Naive thymus-derived CD4-positive, alpha-beta T cell (primary cell): ENCODE measurements at regions of chr19 and their contacts with region 1.

Region 1: DNA sequence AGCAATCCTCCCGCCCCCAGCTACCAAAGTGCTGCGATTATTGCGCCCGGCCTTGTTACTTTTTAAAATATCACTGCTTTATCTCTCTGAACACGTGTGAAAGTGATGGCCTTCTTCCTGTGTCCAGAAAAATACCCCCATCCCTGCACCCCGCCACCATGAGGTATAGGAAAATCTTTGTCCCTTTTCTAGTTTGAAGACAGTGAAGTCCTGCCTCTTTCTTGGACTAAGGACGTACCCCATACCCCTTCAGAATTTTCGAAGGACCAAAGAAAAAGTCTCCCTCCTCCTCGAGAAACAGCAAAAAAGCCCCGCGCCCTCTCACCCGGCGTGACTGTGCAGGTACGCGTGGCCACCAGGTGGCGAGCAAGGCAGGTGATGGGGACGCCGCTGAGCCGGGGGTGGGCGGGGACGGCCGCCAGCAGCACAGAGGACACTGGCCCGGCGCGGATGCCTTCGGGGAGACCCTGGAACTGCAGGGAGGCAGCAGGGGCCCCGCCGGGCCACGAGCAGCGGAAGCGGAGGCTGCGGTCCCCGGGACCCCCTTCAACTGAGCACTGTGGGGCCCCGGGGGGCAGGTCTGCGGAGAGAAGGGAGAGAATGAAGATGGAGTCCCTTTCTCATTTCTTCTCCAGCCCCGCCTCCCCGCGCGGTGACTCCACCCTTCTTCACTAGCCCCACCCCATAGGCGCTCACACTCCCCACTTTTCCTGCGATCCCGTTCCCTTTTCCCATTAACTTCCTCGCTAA is 3.2 kb downstream of the VSIG10L start:
- DNase-seq: peak; percentile 66 to 90 (median 82)
- ATAC-seq: peak; percentile 83
- H3K4me3 ChIP-seq: peak overlapping the region; percentile 65
- H3K4me3 Mint-ChIP-seq: peak overlapping the region; percentile 83 to 94 (median 88)
- H3K27ac ChIP-seq: no peak overlapping the region
- H3K27ac Mint-ChIP-seq: peak overlapping the region in 6 of 9 donors; percentile 7 to 75 (median 60)
- H3K4me1 ChIP-seq: peaks cover 10 to 11% of the 10 kb centered on the region in 2 donors
- H3K4me1 Mint-ChIP-seq: peaks cover 14 to 24% (median 19%) of the 10 kb centered on the region in 7 donors
- H3K27me3 ChIP-seq: no peaks in the 10 kb centered on the region
- H3K27me3 Mint-ChIP-seq: peaks cover 0 to 13% (median 4%) of the 10 kb centered on the region in 5 donors

Region 2: DNA sequence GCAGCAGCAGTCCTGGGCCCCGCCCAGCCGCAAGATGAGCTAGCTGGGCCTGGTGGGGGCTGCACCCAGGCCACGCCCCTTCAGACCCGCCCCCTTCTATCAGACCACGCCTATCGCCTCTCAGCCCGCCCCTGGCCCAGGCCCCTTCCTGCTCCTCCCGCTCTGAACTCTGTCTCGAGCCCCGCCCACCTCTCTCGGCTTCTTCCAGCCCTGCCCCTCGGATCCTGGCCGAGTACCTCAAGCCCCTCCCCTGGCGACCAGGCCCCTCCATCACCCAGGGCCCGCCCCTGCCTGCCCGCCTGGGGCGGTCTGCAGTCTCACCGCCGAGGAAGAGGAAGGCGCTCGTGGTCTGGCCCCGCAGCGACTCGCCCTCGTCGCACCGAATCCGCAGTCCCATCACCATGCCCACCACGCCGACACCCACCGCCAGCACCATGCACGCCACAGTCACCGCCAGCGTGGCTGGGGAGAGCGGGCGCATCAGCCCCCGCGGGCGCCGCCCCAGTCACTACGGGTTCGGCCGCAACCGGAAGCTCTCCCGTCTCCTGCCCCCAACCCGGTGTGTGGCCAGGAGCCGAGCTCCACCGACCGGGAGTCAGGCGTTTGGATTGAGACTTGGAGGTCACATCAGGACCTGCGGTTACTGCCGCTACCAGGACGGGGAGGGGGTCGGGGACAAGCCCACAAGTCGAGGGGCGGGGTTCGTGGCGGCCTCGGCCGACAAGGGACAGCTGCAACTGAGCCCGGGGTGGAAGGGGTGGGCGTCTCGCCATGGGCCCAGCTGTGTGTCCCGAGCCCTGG is 29.0 kb after region 1 on chr19:
- CTCF ChIA-PET with region 1: interaction called, 3 read pairs
- POLR2A ChIA-PET with region 1: no interaction called
- intact Hi-C with region 1: loop called (anchors 1 kb)
- DNase-seq: peak; percentile 84 to 100 (median 90)
- ATAC-seq: peak; percentile 93
- H3K4me3 ChIP-seq: peak overlapping the region; percentile 96
- H3K4me3 Mint-ChIP-seq: peak overlapping the region; percentile 92 to 100 (median 98)
- H3K27ac ChIP-seq: peak overlapping the region; percentile 81
- H3K27ac Mint-ChIP-seq: peak overlapping the region; percentile 79 to 98 (median 95)
- H3K4me1 ChIP-seq: peaks cover 23 to 26% of the 10 kb centered on the region in 2 donors
- H3K4me1 Mint-ChIP-seq: peaks cover 53 to 81% (median 59%) of the 10 kb centered on the region in 7 donors
- H3K27me3 ChIP-seq: no peaks in the 10 kb centered on the region
- H3K27me3 Mint-ChIP-seq: no peaks in the 10 kb centered on the region

Region 3: GRCh38 chr19:51407511-51408131 is 68.9 kb after region 1 on chr19:
- CTCF ChIA-PET with region 1: no interaction called
- POLR2A ChIA-PET with region 1: no interaction called
- intact Hi-C with region 1: loop called (anchors 1 kb)
- DNase-seq: peak in 3 of 9 donors; percentile 14 to 29 (median 23)
- ATAC-seq: peak; percentile 77
- H3K4me3 ChIP-seq: no peak overlapping the region
- H3K4me3 Mint-ChIP-seq: no peak overlapping the region
- H3K27ac ChIP-seq: no peak overlapping the region
- H3K27ac Mint-ChIP-seq: no peak overlapping the region
- H3K4me1 ChIP-seq: no peaks in the 10 kb centered on the region
- H3K4me1 Mint-ChIP-seq: peaks cover 0 to 9% (median 0%) of the 10 kb centered on the region in 7 donors
- H3K27me3 ChIP-seq: no peaks in the 10 kb centered on the region
- H3K27me3 Mint-ChIP-seq: peaks cover 0 to 23% (median 8%) of the 10 kb centered on the region in 5 donors

Region 4: DNA sequence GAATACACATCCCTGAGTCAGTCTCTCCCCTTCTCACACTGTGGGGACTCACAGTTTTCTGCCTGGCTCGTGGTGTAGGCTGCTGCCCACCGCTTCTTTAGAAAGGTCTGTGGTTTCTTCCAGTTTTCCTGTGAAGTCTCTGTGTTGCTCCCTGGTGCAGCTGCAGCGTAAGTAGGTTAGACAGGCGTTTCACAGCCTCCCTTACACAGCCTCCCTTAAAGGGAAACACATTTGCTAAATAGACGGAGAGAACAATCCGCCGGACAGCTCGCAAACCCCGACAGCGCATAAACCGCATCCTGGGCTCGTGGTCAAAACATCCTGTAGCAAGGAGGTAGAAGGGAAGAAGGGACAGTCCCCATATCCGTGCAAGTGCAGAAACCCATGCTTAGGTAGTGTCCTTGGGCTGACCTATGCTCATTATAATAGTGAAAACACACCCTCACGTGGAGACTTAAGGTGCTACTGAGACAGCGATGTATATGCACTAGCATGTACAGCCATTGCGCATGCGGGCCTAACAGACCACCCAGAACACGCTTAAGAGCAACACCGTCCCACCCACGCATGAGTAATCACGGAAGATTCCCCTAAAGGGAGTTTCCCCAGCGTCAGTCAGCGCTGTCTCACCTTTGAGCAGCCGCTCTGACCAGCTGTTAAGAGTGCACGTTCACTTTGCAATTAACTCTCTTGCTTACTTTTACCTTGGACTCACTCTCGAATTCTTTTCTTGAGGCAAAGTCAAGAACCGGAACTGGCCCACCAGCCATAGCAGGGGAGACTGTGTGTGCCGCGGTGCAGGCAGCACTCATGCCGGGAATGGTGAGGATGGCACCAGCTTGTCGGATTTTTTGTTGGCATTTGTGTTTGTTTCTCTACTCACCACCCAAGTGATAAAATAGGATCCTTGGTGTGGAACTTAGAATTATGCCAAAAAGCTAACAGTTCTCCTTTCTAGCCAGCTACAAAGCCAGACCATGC is 103.0 kb after region 1 on chr19:
- CTCF ChIA-PET with region 1: interaction called, 10 read pairs
- POLR2A ChIA-PET with region 1: no interaction called
- intact Hi-C with region 1: loop called (anchors 1 kb)
- DNase-seq: peak; percentile 27 to 87 (median 68)
- ATAC-seq: peak; percentile 91
- H3K4me3 ChIP-seq: peak overlapping the region; percentile 31
- H3K4me3 Mint-ChIP-seq: peak overlapping the region; percentile 74 to 92 (median 83)
- H3K27ac ChIP-seq: peak overlapping the region; percentile 53
- H3K27ac Mint-ChIP-seq: peak overlapping the region; percentile 49 to 88 (median 77)
- H3K4me1 ChIP-seq: peaks cover 22 to 24% of the 10 kb centered on the region in 2 donors
- H3K4me1 Mint-ChIP-seq: peaks cover 22 to 43% (median 34%) of the 10 kb centered on the region in 7 donors
- H3K27me3 ChIP-seq: peaks cover 0 to 4% of the 10 kb centered on the region in 2 donors
- H3K27me3 Mint-ChIP-seq: peaks cover 0 to 59% (median 5%) of the 10 kb centered on the region in 5 donors

Region 5: DNA sequence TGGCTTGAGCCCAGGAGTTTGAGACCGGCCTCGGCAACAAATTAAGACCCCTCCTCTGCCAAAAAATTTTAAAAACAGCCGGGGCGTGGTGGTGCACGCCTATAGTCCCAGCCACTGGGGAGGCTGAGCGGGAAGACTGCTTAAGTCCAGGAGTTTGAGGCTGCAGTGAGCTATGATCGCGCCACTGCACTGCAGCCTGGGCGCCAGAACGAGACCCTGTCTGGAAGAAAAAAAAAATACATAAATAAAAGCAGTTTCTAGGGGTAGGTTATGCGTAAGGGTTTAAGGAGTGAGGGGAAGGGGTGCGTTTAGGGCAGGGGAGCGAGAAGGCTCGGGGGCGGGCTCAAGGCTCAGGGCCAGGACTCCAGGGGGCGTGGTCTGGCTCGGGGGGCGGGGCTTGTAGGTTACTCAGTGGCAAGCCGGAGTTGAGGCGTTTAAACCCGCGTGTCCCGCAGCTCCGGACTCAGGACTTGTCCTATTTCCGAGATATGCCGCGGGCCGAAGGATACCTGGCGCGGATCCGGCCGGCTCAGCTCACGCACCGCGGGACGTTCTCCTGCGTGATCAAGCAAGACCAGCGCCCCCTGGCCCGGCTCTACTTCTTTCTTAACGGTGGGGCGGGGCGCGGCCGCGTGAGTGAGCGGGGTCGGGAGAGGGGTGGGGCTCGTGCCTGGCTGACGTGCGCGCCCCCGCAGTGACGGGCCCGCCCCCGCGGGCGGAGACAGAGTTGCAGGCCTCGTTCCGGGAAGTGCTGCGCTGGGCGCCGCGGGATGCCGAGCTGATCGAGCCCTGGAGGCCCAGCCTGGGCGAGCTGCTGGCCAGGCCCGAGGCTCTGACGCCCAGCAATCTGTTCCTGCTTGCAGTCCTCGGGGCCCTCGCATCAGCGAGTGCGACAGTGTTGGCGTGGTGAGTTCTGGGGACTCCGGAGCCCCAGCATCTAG is 365.1 kb after region 1 on chr19:
- CTCF ChIA-PET with region 1: no interaction called
- POLR2A ChIA-PET with region 1: no interaction called
- intact Hi-C with region 1: loop called in 1 of 2 experiments (anchors 1 kb)
- DNase-seq: peak; percentile 95 to 98 (median 97)
- ATAC-seq: peak; percentile 98
- H3K4me3 ChIP-seq: peak overlapping the region; percentile 98
- H3K4me3 Mint-ChIP-seq: peak overlapping the region; percentile 82 to 92 (median 90)
- H3K27ac ChIP-seq: peak overlapping the region; percentile 99
- H3K27ac Mint-ChIP-seq: peak overlapping the region; percentile 87 to 95 (median 91)
- H3K4me1 ChIP-seq: peaks cover 3 to 9% of the 10 kb centered on the region in 2 donors
- H3K4me1 Mint-ChIP-seq: peaks cover 29 to 50% (median 43%) of the 10 kb centered on the region in 7 donors
- H3K27me3 ChIP-seq: no peaks in the 10 kb centered on the region
- H3K27me3 Mint-ChIP-seq: peaks cover 0 to 7% (median 0%) of the 10 kb centered on the region in 5 donors